ENCODE measurements at regions of chr12 and their contacts with region 1.

Region 1: DNA sequence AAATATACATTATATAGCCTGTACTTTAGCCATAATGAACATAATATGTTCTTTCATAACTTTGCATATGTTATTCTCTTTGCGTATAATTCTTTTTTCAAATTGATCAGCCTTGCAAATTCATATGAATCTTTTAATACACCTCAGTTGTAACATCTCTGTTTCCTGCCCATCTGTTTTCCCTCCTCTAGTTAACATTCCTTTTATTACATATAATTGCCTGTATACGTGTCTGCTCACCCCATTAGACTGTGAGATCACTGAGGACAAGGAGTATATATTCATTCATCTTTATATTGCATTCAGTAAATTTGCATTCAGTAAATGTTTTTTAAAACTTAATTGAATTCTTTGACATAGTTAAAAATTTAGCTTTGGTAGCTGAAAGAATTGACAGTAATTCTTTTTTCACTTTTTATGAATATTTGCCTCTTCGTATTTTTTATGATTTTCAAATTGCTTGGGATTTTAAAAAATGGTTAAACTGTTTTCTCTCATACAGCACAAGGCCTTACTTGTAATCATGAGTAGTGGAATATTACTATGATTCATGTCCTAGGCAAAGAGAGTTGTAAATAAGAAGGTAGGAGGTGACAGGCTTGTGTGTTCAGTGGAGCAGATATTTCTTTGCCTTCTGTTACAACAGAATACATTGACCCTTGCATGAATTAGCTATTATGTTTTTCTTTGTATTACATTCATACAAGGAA is 32.8 kb upstream of the KLHL42 start:
- DNase-seq: no peak
- H3K4me3 ChIP-seq: no peak overlapping the region
- H3K27ac ChIP-seq: peak overlapping the region; percentile 67 to 75
- H3K4me1 ChIP-seq: peaks cover 0 to 4% of the 10 kb centered on the region in 2 donors
- H3K27me3 ChIP-seq: no peaks in the 10 kb centered on the region
- CTCF ChIP-seq: no peak
- POLR2A ChIP-seq: no peak

Region 2: GRCh38 chr12:27821259-27821973 is 74.2 kb after region 1 on chr12:
- intact Hi-C with region 1: loop called (anchors 10 kb)
- DNase-seq: peak; percentile 21 to 45
- H3K4me3 ChIP-seq: no peak overlapping the region
- H3K27ac ChIP-seq: no peak overlapping the region
- H3K4me1 ChIP-seq: peaks cover 0 to 4% of the 10 kb centered on the region in 2 donors
- H3K27me3 ChIP-seq: no peaks in the 10 kb centered on the region
- CTCF ChIP-seq: peak; percentile 67 to 77 (median 70)
- POLR2A ChIP-seq: no peak